ENCODE measurements at regions of chr1 and their contacts with region 1.

Region 1: DNA sequence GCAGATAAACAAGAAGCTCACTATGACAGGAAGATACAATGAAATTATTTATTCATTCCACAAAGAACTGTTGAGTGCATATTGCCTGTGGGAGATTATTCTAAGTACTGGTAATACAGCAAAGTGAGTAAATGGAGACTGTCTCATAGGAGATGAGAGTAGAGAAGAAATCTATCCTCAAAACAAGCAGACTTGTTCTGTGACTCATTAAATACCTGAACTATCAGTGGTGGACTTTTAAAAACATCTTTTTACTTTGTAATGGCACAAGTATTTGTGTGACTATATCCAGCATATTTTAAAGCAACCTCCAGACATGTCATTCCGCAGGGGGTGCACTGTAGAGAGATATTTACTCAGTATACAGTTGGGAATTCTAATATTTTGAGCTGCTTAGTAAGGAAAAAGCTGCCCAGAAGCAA is 259.2 kb downstream of the FMN2 start:
- DNase-seq: no peak
- ATAC-seq: no peak
- H3K4me3 ChIP-seq: no peak overlapping the region
- H3K4me3 Mint-ChIP-seq: no peak overlapping the region
- H3K27ac ChIP-seq: no peak overlapping the region
- H3K27ac Mint-ChIP-seq: no peak overlapping the region
- H3K4me1 ChIP-seq: no peaks in the 10 kb centered on the region
- H3K4me1 Mint-ChIP-seq: no peaks in the 10 kb centered on the region
- H3K27me3 ChIP-seq: no peaks in the 10 kb centered on the region
- H3K27me3 Mint-ChIP-seq: no peaks in the 10 kb centered on the region

Region 2: DNA sequence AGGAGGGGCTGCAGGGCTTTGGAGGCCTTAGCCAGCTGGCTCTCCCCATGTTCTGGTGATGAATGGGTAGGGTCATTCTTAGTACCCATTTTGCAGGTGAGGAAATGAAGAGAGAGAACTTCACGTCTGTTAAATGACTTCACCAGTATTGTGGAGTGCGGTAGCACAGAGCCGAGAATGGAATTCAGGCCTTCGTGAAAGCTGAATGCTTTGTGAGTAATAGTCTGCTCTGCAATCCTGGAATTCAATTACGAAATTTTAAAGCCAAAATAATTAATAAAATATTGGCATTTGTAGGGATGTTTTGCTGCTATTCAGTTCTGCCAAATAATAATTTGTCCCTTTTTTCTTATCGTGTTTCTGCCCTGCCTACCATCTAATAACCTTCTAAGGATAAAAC is 63.3 kb after region 1 on chr1:
- CTCF ChIA-PET with region 1: no interaction called
- POLR2A ChIA-PET with region 1: interaction called in 1 of 2 experiments, 15 read pairs
- DNase-seq: no peak
- ATAC-seq: no peak
- H3K4me3 ChIP-seq: no peak overlapping the region
- H3K4me3 Mint-ChIP-seq: no peak overlapping the region
- H3K27ac ChIP-seq: no peak overlapping the region
- H3K27ac Mint-ChIP-seq: no peak overlapping the region
- H3K4me1 ChIP-seq: no peaks in the 10 kb centered on the region
- H3K4me1 Mint-ChIP-seq: no peaks in the 10 kb centered on the region
- H3K27me3 ChIP-seq: peaks cover 0 to under 1% of the 10 kb centered on the region in 2 experiments
- H3K27me3 Mint-ChIP-seq: no peaks in the 10 kb centered on the region